Activated CD8-positive, alpha-beta memory T cell treated with anti-CD3 and anti-CD28 coated beads, Interleukin-2, amount 10 ng/mL, durations not matched to agents 7 days and 5 days (primary cell): ENCODE measurements at regions of chr9 and their contacts with region 1.

Region 1: GRCh38 chr9:4984621-4985385 is at the start of gene JAK2:
- DNase-seq: peak; percentile 94
- ATAC-seq: peak; percentile 87
- H3K4me3 Mint-ChIP-seq: peak within 1 kb of the TSS; percentile 88
- H3K27ac Mint-ChIP-seq: peak within 1 kb of the TSS; percentile 90
- H3K4me1 Mint-ChIP-seq: peaks cover 44% of the 10 kb centered on the region
- H3K27me3 Mint-ChIP-seq: no peaks in the 10 kb centered on the region
- total RNA-seq, gene JAK2: 20.6 to 27.0 TPM

Region 2: DNA sequence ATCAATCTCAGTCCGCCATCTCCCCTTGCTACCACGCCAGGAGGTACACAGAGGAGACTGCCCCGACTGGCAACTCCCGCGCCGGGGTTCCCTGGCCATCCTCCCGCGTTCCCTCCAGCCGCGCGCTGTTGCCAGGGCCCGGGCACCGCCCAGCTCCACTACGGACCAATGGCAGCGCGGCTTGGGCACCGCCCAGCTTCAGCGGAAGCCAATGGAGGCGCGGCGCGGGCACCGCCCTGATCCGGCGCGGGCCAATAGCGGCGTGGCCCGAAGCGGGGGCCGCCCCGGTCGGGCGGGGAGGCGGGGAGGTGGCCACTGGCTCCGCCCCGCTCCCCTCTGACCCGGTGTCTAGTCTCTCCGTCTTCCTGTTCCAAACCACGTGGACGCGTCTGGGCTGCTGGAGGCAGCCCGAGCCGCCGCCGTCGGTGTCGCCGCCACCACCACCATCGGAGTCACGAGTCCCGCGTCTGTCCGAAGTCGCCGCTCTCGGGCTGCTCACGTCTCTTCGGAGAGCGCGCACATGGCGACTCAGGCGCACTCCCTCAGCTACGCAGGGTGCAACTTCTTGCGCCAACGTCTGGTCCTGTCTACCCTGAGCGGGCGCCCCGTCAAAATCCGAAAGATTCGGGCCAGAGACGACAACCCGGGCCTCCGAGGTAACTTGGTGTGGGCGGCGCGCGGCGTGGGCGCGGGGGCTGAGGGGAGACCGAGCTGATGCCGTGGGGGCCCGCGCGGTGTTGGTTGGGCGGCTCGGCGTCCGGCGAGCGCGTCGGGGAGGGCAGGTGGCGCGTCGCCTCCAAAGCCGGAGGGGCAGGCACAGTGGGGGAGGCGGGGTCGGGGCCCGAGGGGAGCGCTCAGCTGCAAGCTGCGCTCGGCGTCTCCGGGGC is 192.0 kb before region 1 on chr9 and contains the start of gene RCL1:
- CTCF ChIA-PET with region 1: interaction called, 14 read pairs
- DNase-seq: peak; percentile 98
- ATAC-seq: peak; percentile 97
- H3K4me3 Mint-ChIP-seq: peak within 1 kb of the TSS; percentile 96
- H3K27ac Mint-ChIP-seq: peak within 1 kb of the TSS; percentile 93
- H3K4me1 Mint-ChIP-seq: peaks cover 33% of the 10 kb centered on the region
- H3K27me3 Mint-ChIP-seq: no peaks in the 10 kb centered on the region
- total RNA-seq, gene RCL1: 14.3 to 20.2 TPM

Region 3: DNA sequence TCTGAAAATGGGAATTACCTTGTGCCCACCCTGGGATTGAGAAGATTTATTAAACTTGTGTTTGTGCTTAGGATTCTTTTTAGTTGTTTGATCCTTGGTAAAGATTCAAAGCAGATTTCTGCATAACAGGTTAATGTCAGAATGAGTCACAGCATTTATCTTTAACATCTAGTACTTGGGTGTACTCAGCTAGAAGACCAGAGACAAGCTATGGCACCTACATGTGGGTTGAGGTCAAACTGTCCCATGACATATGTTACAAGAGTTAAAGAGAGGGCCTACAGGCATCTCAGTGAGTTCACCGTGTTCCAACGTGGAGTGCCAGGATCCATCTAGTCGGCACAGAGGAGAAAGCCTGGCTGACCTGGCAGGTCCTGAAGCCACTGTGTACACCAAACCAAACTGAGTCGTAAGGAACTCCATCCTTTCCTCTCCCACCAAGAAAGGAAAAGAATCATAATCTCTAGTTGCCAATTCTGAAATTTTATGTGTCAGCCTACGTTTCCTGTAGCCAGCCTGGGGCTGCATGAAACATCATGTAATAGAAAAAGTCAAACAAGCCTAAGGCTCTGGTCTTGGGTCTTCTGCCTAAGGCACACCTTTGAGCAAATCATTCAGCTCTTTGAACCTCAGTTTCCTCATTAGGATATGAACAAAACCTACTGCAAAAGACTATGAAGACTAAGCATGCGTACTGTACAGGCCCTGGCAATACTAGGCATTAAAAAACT is 118.4 kb before region 1 on chr9:
- CTCF ChIA-PET with region 1: interaction called, 12 read pairs
- DNase-seq: peak; percentile 59
- ATAC-seq: peak; percentile 82
- H3K4me3 Mint-ChIP-seq: no peak overlapping the region
- H3K27ac Mint-ChIP-seq: peak overlapping the region; percentile 75
- H3K4me1 Mint-ChIP-seq: peaks cover 27% of the 10 kb centered on the region
- H3K27me3 Mint-ChIP-seq: no peaks in the 10 kb centered on the region

Region 4: GRCh38 chr9:4923580-4924544 is 60.9 kb before region 1 on chr9:
- CTCF ChIA-PET with region 1: interaction called, 22 read pairs
- DNase-seq: no peak
- ATAC-seq: peak; percentile 79
- H3K4me3 Mint-ChIP-seq: no peak overlapping the region
- H3K27ac Mint-ChIP-seq: peak overlapping the region; percentile 37
- H3K4me1 Mint-ChIP-seq: peaks cover 32% of the 10 kb centered on the region
- H3K27me3 Mint-ChIP-seq: no peaks in the 10 kb centered on the region

Region 5: DNA sequence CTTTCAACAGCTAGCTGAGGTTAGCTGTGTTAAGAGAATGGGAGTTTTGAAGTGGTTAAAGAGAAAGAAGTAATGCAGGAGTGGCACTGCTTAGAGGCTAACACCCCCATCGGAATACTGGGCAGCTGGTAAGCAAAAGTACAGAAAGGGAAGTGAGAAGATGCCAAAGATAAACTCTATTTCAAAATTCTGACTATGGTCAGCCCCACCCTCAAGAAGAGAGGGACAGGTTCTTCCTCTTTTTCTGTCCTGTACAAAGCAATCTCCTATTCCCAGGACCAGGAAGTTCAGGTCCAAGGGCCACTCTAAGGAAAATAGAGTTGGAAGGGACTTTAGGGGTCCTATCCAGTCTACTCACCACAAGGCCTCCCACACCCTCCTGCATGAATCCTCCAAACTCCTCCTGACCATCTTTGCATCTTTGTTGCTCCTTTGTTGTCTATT is 45.7 kb before region 1 on chr9:
- CTCF ChIA-PET with region 1: interaction called, 12 read pairs
- DNase-seq: no peak
- ATAC-seq: peak; percentile 67
- H3K4me3 Mint-ChIP-seq: peak overlapping the region; percentile 10
- H3K27ac Mint-ChIP-seq: peak overlapping the region; percentile 76
- H3K4me1 Mint-ChIP-seq: peaks cover 67% of the 10 kb centered on the region
- H3K27me3 Mint-ChIP-seq: no peaks in the 10 kb centered on the region

Region 6: GRCh38 chr9:4970970-4971641 is 13.7 kb before region 1 on chr9:
- CTCF ChIA-PET with region 1: interaction called, 11 read pairs
- DNase-seq: peak; percentile 86
- ATAC-seq: peak; percentile 95
- H3K4me3 Mint-ChIP-seq: no peak overlapping the region
- H3K27ac Mint-ChIP-seq: no peak overlapping the region
- H3K4me1 Mint-ChIP-seq: peaks cover 32% of the 10 kb centered on the region
- H3K27me3 Mint-ChIP-seq: no peaks in the 10 kb centered on the region